ENCODE measurements at regions of chr11 and their contacts with region 1.

Region 1: DNA sequence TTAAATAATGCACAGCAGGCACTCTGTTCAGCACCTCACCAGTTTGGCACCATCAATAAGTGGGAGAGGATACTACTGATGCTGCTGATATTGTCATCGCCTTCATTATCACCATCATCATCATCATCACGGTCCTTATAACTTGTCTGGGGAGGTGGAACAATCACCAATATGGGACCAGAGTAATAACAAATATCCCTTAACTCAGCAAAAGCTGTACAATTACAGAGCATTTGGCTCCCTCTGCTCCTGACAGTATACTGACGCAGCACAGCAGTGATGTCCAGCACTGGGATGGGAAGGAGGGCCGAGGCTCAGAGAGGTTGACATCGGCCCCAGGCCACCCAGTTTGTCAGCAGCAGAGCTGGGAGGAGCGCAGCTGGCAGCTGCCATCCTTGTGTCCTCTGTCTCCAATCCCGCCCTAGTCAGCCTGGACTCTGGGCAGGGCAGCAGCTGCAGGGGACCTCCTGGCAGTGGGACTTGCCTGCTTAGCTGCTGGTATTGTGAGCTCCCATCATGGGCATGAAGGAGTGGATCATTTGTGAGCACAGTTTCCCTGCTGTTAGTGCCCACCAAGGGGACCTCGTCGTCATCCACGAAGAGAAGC is 90.0 kb downstream of the DHCR7 start:
- DNase-seq: no peak
- H3K4me3 ChIP-seq: no peak overlapping the region
- H3K4me3 Mint-ChIP-seq: no peak overlapping the region
- H3K27ac Mint-ChIP-seq: no peak overlapping the region
- H3K4me1 ChIP-seq: no peaks in the 10 kb centered on the region
- H3K4me1 Mint-ChIP-seq: no peaks in the 10 kb centered on the region
- H3K27me3 ChIP-seq: no peaks in the 10 kb centered on the region
- H3K27me3 Mint-ChIP-seq: peaks cover 13% of the 10 kb centered on the region
- CTCF ChIP-seq: no peak

Region 2: GRCh38 chr11:71262069-71262468 is 96.2 kb before region 1 on chr11:
- CTCF ChIA-PET with region 1: no interaction called
- POLR2A ChIA-PET with region 1: interaction called, 14 read pairs
- intact Hi-C with region 1: no loop called
- DNase-seq: no peak
- H3K4me3 ChIP-seq: no peak overlapping the region
- H3K4me3 Mint-ChIP-seq: no peak overlapping the region
- H3K27ac Mint-ChIP-seq: no peak overlapping the region
- H3K4me1 ChIP-seq: peaks cover 14% of the 10 kb centered on the region
- H3K4me1 Mint-ChIP-seq: peaks cover 25% of the 10 kb centered on the region
- H3K27me3 ChIP-seq: no peaks in the 10 kb centered on the region
- H3K27me3 Mint-ChIP-seq: no peaks in the 10 kb centered on the region
- CTCF ChIP-seq: no peak

Region 3: DNA sequence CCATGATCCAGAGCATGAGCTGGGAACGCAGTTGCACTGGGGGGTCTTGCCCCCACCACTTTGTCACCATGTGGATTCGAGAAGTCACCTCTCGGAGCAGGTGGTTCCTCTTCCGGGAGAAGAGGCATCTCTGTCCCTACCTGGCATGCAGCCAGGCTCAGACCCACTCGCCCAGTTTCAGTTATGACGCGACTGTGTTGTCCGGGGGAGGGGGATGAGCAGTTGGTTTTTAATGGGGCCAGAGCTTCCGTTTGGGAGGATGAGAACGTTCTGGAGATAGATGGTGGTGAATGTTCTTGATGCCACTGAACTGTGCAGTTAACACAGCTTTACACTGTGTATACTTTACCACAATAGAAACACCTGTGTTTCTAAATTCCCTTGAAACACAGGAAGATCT is 48.5 kb after region 1 on chr11:
- CTCF ChIA-PET with region 1: no interaction called
- POLR2A ChIA-PET with region 1: no interaction called
- intact Hi-C with region 1: no loop called
- DNase-seq: no peak
- H3K4me3 ChIP-seq: no peak overlapping the region
- H3K4me3 Mint-ChIP-seq: no peak overlapping the region
- H3K27ac Mint-ChIP-seq: no peak overlapping the region
- H3K4me1 ChIP-seq: no peaks in the 10 kb centered on the region
- H3K4me1 Mint-ChIP-seq: no peaks in the 10 kb centered on the region
- H3K27me3 ChIP-seq: 0 out of 2 replicates have a peak, but pooled peaks cover 1% of the 10 kb centered on the region
- H3K27me3 Mint-ChIP-seq: peaks cover 22% of the 10 kb centered on the region
- CTCF ChIP-seq: no peak

Measured in Caco-2 (cell line).